ENCODE measurements at regions of chr9 and their contacts with region 1.

Region 1: DNA sequence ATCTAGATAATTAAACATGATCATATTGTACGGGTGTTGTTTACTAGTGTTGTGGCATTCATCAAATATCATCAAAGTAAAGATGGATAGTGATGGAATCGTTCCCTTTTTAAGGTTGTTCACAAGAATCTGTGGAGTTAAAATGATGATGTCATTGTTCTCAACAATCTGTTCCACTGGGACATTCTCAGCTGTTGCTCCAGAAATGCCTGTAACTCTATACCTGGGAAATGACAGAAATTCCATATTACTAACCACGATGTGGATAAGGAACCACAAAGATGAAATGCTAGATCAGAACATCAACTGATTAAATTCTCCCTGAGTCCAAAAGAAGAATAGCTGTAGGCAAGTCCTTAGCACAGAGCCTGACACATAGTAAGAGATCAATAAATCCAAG is 38.0 kb downstream of the RIGI start:
- DNase-seq: no peak
- ATAC-seq: no peak
- H3K4me3 ChIP-seq: no peak overlapping the region
- H3K4me3 Mint-ChIP-seq: no peak overlapping the region
- H3K27ac ChIP-seq: no peak overlapping the region
- H3K27ac Mint-ChIP-seq: no peak overlapping the region
- H3K4me1 ChIP-seq: no peaks in the 10 kb centered on the region
- H3K4me1 Mint-ChIP-seq: no peaks in the 10 kb centered on the region
- H3K27me3 ChIP-seq: no peaks in the 10 kb centered on the region
- H3K27me3 Mint-ChIP-seq: no peaks in the 10 kb centered on the region
- CTCF ChIP-seq: no peak

Region 2: DNA sequence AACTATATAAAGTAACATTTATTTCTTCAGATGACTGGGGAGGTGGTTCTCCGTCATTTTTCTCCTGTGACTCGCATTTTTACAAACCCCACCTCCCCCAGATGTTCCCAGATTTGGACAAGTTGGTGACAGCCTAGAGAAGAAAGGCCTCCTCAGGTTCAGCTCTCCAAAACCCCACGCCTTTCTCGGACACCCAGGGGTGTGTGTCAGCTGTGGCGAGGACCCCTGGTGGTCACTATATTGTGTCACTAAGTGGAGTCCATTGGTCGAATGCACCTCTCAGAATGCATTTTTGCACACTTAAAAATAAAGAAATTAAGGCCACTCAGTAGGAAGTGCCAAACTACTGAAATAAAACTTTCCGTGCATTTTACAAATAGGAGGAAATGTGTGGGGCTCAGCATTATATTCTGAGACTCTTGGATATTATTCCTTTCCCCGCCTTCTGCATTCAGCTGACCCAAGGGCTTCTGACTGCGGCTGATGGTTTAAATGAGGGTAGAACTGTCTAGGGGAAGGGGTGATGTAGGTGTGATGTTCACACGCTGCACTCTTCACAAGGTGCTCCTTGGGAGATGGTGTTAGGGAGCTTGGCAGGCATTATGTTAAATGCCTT is 55.9 kb before region 1 on chr9:
- CTCF ChIA-PET with region 1: no interaction called
- POLR2A ChIA-PET with region 1: interaction called, 4 read pairs
- intact Hi-C with region 1: loop called (anchors 10 kb)
- DNase-seq: peak; percentile 44
- ATAC-seq: peak; percentile 49
- H3K4me3 ChIP-seq: no peak overlapping the region
- H3K4me3 Mint-ChIP-seq: no peak overlapping the region
- H3K27ac ChIP-seq: no peak overlapping the region
- H3K27ac Mint-ChIP-seq: no peak overlapping the region
- H3K4me1 ChIP-seq: no peaks in the 10 kb centered on the region
- H3K4me1 Mint-ChIP-seq: no peaks in the 10 kb centered on the region
- H3K27me3 ChIP-seq: no peaks in the 10 kb centered on the region
- H3K27me3 Mint-ChIP-seq: no peaks in the 10 kb centered on the region
- CTCF ChIP-seq: peak; percentile 49

Measured in B cell (primary cell).